Activated CD4-positive, alpha-beta memory T cell treated with anti-CD3 and anti-CD28 coated beads, Interleukin-2, amount 10 ng/mL, durations not matched to agents 7 days and 5 days (primary cell): ENCODE measurements at regions of chr9 and their contacts with region 1.

Region 1: GRCh38 chr9:125261501-125262293 is at the start of gene GAPVD1:
- DNase-seq: peak; percentile 92
- H3K4me3 Mint-ChIP-seq: peak within 1 kb of the TSS; percentile 91
- H3K27ac Mint-ChIP-seq: peak within 1 kb of the TSS; percentile 86
- H3K4me1 Mint-ChIP-seq: peaks cover 42% of the 10 kb centered on the region
- H3K27me3 Mint-ChIP-seq: peaks cover 2% of the 10 kb centered on the region
- total RNA-seq, gene GAPVD1: 47.7 to 49.6 TPM

Region 2: GRCh38 chr9:125172031-125172755 is 89.5 kb before region 1 on chr9:
- CTCF ChIA-PET with region 1: no interaction called
- POLR2A ChIA-PET with region 1: no interaction called
- DNase-seq: no peak
- H3K4me3 Mint-ChIP-seq: no peak overlapping the region
- H3K27ac Mint-ChIP-seq: peak overlapping the region; percentile 45
- H3K4me1 Mint-ChIP-seq: peaks cover 15% of the 10 kb centered on the region
- H3K27me3 Mint-ChIP-seq: no peaks in the 10 kb centered on the region

Region 3: GRCh38 chr9:125233678-125234077 is 28.0 kb before region 1 on chr9:
- CTCF ChIA-PET with region 1: interaction called, 3 read pairs
- POLR2A ChIA-PET with region 1: interaction called, 17 read pairs
- DNase-seq: no peak
- H3K4me3 Mint-ChIP-seq: no peak overlapping the region
- H3K27ac Mint-ChIP-seq: no peak overlapping the region
- H3K4me1 Mint-ChIP-seq: peaks cover 36% of the 10 kb centered on the region
- H3K27me3 Mint-ChIP-seq: no peaks in the 10 kb centered on the region